Dendritic cell treated with granulocyte-macrophage colony-stimulating factor and Interleukin-4, amounts not matched to agents 40 ng/mL and 50 ng/mL, for 4 days (primary cell): ENCODE measurements at regions of chr3 and their contacts with region 1.

Region 1: DNA sequence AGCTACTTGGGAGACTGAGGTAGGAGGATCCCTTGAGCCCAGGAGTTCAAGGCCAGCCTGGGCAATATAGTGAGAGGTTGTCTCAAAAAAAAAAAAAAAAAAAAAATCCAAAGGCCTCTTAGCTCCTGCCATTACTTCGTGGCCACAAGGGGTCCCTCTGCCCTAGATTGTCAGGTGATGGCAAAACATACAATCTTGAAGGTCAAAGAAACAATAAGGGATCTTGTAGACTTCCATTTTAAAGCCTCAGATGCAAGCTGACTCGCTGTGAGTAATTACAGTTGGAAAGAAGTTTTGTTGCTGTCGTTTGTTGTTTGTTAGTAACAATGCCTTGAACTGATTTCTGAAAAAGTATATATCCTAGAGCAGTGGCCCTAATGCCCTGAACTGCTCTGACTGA is 55.9 kb upstream of the PLCL2 start:
- H3K4me3 Mint-ChIP-seq: no peak overlapping the region
- H3K27ac Mint-ChIP-seq: no peak overlapping the region
- H3K4me1 Mint-ChIP-seq: no peaks in the 10 kb centered on the region
- H3K27me3 Mint-ChIP-seq: no peaks in the 10 kb centered on the region

Region 2: GRCh38 chr3:16945330-16945729 is 116.5 kb after region 1 on chr3:
- intact Hi-C with region 1: no loop called
- H3K4me3 Mint-ChIP-seq: no peak overlapping the region
- H3K27ac Mint-ChIP-seq: no peak overlapping the region
- H3K4me1 Mint-ChIP-seq: peaks cover 32% of the 10 kb centered on the region
- H3K27me3 Mint-ChIP-seq: no peaks in the 10 kb centered on the region

Region 3: GRCh38 chr3:17233398-17233800 is 404.6 kb after region 1 on chr3:
- intact Hi-C with region 1: loop called (anchors 2 kb)
- H3K4me3 Mint-ChIP-seq: no peak overlapping the region
- H3K27ac Mint-ChIP-seq: no peak overlapping the region
- H3K4me1 Mint-ChIP-seq: peaks cover 5% of the 10 kb centered on the region
- H3K27me3 Mint-ChIP-seq: no peaks in the 10 kb centered on the region